GM10248 (cell line): ENCODE measurements at regions of chr12 and their contacts with region 1.

Region 1: DNA sequence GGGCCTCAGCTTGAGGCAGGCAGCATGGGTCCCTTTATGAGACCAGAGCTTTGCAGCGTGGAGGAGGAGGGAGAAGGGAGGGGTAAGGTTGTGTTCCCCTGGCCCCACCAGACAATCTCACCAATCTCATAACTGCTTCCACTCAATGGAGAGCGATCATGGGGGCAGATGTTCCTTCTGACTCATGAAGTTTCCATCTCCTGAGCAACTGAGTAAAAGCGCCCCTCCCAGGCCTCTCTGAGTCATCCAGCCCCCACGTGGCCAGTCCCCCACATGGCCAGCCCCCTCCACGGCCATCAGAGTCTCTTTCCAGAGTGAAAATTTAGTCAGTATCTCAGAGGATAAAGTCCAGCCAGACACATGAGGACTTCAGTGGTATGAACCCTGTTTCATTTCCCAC is 39.2 kb upstream of the PLXNC1 start:
- DNase-seq: peak; percentile 55
- CTCF ChIP-seq: no peak

Region 2: GRCh38 chr12:93427779-93428563 is 681.2 kb before region 1 on chr12:
- CTCF ChIA-PET with region 1: no interaction called
- POLR2A ChIA-PET with region 1: interaction called, 11 read pairs
- DNase-seq: no peak
- CTCF ChIP-seq: no peak

Region 3: DNA sequence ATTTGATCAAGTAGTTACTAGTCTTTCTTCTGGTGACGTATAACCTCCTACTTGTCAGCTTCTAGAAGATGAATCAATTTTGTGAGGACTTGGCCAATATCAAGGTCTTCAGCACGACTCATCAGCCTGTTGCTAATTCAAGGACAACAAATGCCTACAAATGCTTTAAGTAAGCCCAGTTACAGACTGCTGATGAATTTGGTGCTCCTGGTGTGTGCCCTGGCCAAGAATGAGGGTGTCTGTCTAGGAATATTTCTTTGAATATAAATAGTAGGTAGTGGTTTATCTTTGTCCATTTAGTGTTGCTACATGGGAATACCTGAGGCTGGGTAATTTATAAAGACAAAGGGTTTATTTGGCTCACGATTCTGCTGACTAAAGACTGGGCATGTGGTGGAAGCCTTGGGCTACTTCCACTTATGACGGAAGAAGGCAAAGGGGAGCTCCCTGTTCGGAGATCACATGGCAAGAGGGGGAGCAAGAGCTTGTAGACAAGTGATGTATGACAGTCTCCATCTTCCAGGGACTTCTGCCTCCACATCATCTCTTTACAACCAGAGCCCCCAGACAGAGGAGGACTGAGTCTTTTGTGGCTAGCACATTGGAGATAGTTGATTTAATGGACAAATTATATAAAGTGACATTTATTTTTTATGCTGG is 251.8 kb before region 1 on chr12:
- CTCF ChIA-PET with region 1: no interaction called
- POLR2A ChIA-PET with region 1: no interaction called
- DNase-seq: no peak
- CTCF ChIP-seq: no peak

Region 4: GRCh38 chr12:93982771-93983315 is 126.3 kb before region 1 on chr12:
- CTCF ChIA-PET with region 1: no interaction called
- POLR2A ChIA-PET with region 1: no interaction called
- DNase-seq: no peak
- CTCF ChIP-seq: no peak

Region 5: GRCh38 chr12:94289461-94290312 is 180.5 kb after region 1 on chr12:
- CTCF ChIA-PET with region 1: no interaction called
- POLR2A ChIA-PET with region 1: no interaction called
- DNase-seq: no peak
- CTCF ChIP-seq: no peak